Right cardiac atrium (tissue), 5 donors: ENCODE measurements at regions of chr4 and their contacts with region 1.

Region 1: DNA sequence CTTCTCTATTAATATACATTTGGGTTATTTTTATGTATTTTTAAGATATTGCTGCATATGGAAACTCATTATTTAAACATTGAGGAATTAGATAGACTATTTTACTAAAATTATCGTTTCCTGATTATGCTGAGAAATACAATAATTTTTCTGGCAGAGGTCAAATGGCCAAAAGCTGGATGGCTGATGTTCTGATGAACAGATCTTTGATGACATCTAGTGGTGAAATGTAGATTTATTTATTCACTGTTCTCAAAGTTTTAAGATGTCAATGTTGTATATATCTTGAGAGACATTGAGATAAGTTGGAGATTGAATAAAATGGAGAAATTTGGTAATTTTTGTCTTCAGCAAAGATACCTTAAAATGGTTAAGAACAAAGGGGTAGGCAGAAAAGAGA is 96.2 kb downstream of the UGT8 start:
- DNase-seq: no peak
- ATAC-seq: no peak
- H3K4me3 ChIP-seq: no peak overlapping the region
- H3K27ac ChIP-seq: no peak overlapping the region
- H3K4me1 ChIP-seq: no peaks in the 10 kb centered on the region
- H3K27me3 ChIP-seq: no peaks in the 10 kb centered on the region

Region 2: DNA sequence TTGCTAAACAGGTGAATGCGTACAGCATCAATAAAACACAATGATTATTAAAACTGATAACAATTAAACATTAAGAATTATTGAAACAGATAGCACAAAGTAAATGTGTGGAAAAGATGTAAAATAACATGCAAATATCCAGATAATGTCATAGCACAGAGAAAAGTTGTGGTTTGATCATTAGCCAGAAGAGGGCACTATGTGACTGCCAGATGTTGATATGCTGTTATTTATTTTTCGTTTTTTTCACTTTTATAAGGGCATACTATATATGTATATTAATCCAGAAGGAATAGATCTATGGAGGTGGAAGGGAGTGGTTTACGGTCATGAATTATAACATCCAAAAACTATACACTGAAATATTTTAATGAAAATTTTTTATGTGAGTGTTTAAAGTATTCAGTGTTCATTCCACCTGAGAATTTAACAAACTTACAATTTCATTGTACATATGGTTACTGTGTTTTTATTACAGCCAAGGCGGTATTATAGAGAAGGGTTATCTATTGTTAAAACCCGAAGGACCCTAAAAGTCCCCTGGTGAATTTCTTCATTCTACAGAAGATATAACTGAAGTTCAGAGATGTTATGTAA is 308.0 kb before region 1 on chr4:
- intact Hi-C with region 1: loop called in 3 of 4 experiments (anchors 5 to 10 kb)
- DNase-seq: no peak
- ATAC-seq: no peak
- H3K4me3 ChIP-seq: no peak overlapping the region
- H3K27ac ChIP-seq: no peak overlapping the region
- H3K4me1 ChIP-seq: no peaks in the 10 kb centered on the region
- H3K27me3 ChIP-seq: no peaks in the 10 kb centered on the region

Region 3: DNA sequence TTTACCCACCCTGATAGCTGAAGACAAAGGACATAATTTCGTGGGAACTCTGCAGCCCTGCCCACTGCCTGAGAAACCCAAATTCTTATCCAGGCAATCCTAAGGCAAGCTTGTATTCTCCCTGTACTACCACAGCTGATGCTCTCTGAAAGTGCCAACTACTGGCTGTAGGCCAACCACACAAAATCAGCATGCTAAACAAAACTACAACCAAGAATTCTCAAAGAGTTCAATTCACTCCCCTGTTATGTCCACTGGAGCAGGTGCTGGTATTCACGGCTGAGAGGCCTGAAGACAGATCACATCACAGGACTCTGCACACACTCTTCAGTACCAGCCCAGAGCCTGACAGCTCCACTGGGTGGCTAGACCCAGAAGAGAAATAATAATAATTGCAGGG is 794.5 kb after region 1 on chr4:
- intact Hi-C with region 1: no loop called
- DNase-seq: no peak
- ATAC-seq: no peak
- H3K4me3 ChIP-seq: no peak overlapping the region
- H3K27ac ChIP-seq: no peak overlapping the region
- H3K4me1 ChIP-seq: no peaks in the 10 kb centered on the region
- H3K27me3 ChIP-seq: no peaks in the 10 kb centered on the region